GM12878 (cell line): ENCODE measurements at regions of chrX and their contacts with region 1.

Region 1: GRCh38 chrX:141278302-141278701 is 36.0 kb upstream of the SPANXC start:
- DNase-seq: no peak
- ATAC-seq: peak; percentile 86
- H3K4me3 ChIP-seq: no peak overlapping the region
- H3K27ac ChIP-seq: no peak overlapping the region
- H3K4me1 ChIP-seq: no peaks in the 10 kb centered on the region
- H3K27me3 ChIP-seq: no peaks in the 10 kb centered on the region
- CTCF ChIP-seq: peak; percentile 40 to 56 (median 48)
- EP300 ChIP-seq: no peak
- POLR2A ChIP-seq: no peak
- RAD21 ChIP-seq: peak; percentile 37

Region 2: DNA sequence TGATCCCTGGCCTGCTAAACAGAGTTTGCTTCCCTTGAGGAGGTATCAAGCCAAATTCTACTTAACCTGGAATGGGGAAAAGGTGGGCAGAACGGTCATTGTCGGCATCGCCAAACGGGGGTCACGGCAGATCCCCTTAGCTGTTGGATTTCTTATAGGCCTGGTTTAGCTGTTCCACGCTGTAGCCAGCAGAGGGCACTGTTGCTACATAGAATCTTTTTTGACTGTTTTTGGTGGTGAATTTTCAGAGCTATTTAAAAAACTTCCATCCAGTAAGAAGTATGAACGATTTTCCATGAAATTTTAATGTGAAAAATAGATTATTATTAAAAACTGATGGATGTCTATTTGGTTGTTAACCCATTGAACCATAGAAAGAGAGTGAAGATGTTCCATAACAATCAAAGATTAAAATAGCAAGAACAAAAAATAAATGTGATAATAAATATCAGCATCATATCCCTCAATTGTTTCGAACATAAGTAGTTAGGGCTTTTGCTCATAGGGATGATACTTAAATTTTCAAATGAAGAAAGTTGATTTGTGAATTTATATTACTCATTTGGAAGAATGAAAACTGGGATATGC is 512.2 kb before region 1 on chrX:
- CTCF ChIA-PET with region 1: interaction called, 27 read pairs
- POLR2A ChIA-PET with region 1: no interaction called
- RAD21 ChIA-PET with region 1: interaction called, 8 read pairs
- SMC1A ChIA-PET with region 1: interaction called, 7 read pairs
- in situ Hi-C with region 1: no loop called
- intact Hi-C with region 1: loop called (anchors 2 kb)
- DNase-seq: no peak
- ATAC-seq: peak; percentile 63
- H3K4me3 ChIP-seq: no peak overlapping the region
- H3K27ac ChIP-seq: no peak overlapping the region
- H3K4me1 ChIP-seq: no peaks in the 10 kb centered on the region
- H3K27me3 ChIP-seq: no peaks in the 10 kb centered on the region
- CTCF ChIP-seq: peak; percentile 77 to 86 (median 84)
- EP300 ChIP-seq: no peak
- POLR2A ChIP-seq: no peak
- RAD21 ChIP-seq: peak; percentile 72

Region 3: DNA sequence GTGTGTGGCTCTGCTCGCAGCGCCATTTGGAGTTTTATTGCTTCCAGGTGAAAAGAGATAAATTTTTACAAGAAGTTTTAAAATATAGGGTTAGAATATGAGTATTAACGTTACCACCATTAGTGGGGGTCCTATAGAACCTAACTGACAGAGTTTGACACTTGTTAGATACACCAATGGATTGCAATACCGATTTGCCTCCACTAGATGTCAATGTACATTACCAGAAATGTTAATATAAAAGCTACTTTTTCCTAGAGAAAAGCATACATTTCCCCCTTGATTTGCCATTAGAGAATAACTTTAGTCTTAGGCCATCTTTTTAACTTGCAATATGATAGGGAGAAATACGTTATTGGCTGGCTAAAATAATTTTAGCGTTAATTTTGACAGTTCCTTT is 460.4 kb before region 1 on chrX:
- CTCF ChIA-PET with region 1: interaction called, 10 read pairs
- POLR2A ChIA-PET with region 1: no interaction called
- RAD21 ChIA-PET with region 1: no interaction called
- SMC1A ChIA-PET with region 1: interaction called, 6 read pairs
- in situ Hi-C with region 1: no loop called
- intact Hi-C with region 1: no loop called
- DNase-seq: no peak
- ATAC-seq: peak; percentile 56; the same call in 2 of the 3 replicates
- H3K4me3 ChIP-seq: no peak overlapping the region
- H3K27ac ChIP-seq: no peak overlapping the region
- H3K4me1 ChIP-seq: no peaks in the 10 kb centered on the region
- H3K27me3 ChIP-seq: no peaks in the 10 kb centered on the region
- CTCF ChIP-seq: peak; percentile 46 to 54 (median 53)
- EP300 ChIP-seq: no peak
- POLR2A ChIP-seq: no peak
- RAD21 ChIP-seq: peak; percentile 38; the same call in 1 of the 2 replicates

Region 4: DNA sequence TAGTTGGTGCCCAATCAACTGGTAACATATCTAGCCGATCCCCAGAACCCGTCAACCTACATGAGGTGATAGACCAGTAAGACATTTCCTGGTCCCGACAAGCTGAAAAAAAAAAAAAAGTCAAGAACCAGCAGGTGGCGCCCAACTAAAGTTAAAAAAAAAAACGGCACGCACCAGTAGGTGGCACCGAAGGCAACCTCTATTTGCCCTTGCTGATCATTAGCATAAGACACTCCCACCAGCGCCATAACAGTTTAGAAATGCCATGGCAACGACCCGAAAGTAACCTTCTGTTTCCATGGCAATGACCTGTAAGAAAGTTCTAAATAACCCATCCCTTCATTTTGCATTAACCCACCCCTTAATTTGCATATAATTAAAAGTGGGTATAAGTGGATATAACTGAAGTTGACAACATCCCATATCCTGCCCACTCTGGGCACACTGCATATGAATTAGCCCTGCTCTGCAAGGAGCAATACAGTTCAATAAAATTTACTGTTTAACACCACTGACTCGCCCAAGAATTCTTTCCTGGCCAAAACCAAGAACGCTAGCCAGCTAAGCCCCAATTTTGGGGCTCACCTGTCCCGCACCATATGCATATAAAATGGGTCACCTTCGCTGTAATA is 359.8 kb before region 1 on chrX:
- CTCF ChIA-PET with region 1: interaction called, 8 read pairs
- POLR2A ChIA-PET with region 1: no interaction called
- RAD21 ChIA-PET with region 1: no interaction called
- SMC1A ChIA-PET with region 1: interaction called, 3 read pairs
- in situ Hi-C with region 1: no loop called
- intact Hi-C with region 1: loop called (anchors 2 kb)
- DNase-seq: peak; percentile 7
- ATAC-seq: peak; percentile 96
- H3K4me3 ChIP-seq: no peak overlapping the region
- H3K27ac ChIP-seq: no peak overlapping the region
- H3K4me1 ChIP-seq: no peaks in the 10 kb centered on the region
- H3K27me3 ChIP-seq: no peaks in the 10 kb centered on the region
- CTCF ChIP-seq: peak; percentile 47 to 65 (median 60); a peak in 5 of 6 replicates
- EP300 ChIP-seq: no peak
- POLR2A ChIP-seq: no peak
- RAD21 ChIP-seq: peak; percentile 47

Region 5: DNA sequence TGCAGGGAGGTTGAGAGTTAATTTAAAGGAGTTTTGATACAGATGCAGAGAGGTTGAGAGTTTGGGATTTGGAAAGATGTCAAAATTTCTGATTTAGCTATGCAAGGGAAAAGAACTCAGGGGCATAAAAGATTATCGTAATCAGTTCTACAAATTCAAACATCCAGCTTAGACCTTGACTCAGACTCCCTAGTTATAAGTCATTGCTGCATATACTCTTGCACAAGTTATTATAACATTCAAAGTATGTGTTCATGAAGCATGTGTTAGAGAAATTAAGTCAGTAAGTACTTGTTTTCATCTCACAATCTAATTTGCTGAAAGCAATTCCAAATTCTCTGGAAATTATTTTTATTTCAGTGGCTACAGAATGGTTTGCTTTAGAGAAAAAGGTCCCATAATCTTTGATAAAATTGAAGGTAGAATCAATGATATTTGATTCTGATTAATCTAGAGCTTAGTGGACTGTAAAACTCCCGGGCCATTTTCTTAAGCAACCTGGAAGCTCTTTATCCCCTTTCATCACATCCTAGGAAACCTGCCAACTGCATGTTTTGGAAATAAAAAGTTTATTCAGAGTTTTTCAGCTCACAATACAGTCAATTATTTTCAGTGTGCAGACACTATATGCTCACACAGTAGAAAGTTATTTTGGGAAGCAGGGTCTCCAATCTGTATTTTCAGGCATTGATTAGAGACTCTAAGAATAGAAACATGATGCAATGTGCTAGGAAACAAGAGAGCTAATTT is 96.9 kb after region 1 on chrX:
- CTCF ChIA-PET with region 1: no interaction called
- POLR2A ChIA-PET with region 1: no interaction called
- RAD21 ChIA-PET with region 1: no interaction called
- SMC1A ChIA-PET with region 1: no interaction called
- in situ Hi-C with region 1: no loop called
- intact Hi-C with region 1: no loop called
- DNase-seq: no peak
- ATAC-seq: no peak
- H3K4me3 ChIP-seq: no peak overlapping the region
- H3K27ac ChIP-seq: no peak overlapping the region
- H3K4me1 ChIP-seq: no peaks in the 10 kb centered on the region
- H3K27me3 ChIP-seq: no peaks in the 10 kb centered on the region
- CTCF ChIP-seq: no peak
- EP300 ChIP-seq: no peak
- POLR2A ChIP-seq: no peak
- RAD21 ChIP-seq: no peak